ENCODE measurements at regions of chr7 and their contacts with region 1.

Region 1: GRCh38 chr7:154927624-154928143 is 75.2 kb downstream of the PAXIP1 start:
- DNase-seq: peak in 4 of 5 donors; percentile 58 to 78 (median 74)
- ATAC-seq: peak; percentile 43 to 90 (median 84)
- H3K4me3 ChIP-seq: peak overlapping the region; percentile 9 to 76 (median 64)
- H3K27ac ChIP-seq: peak overlapping the region; percentile 8 to 90 (median 77)
- H3K4me1 ChIP-seq: peaks cover 0 to 19% (median 6%) of the 10 kb centered on the region in 12 donors
- H3K27me3 ChIP-seq: no peaks in the 10 kb centered on the region
- CTCF ChIP-seq: peak; percentile 33 to 80 (median 64)
- POLR2A ChIP-seq: no peak

Region 2: GRCh38 chr7:155009570-155010157 is 82.0 kb after region 1 on chr7:
- intact Hi-C with region 1: loop called in 9 of 10 experiments (anchors 5 to 10 kb)
- DNase-seq: no peak
- ATAC-seq: no peak
- H3K4me3 ChIP-seq: no peak overlapping the region
- H3K27ac ChIP-seq: no peak overlapping the region
- H3K4me1 ChIP-seq: peaks cover 0 to 4% (median 0%) of the 10 kb centered on the region in 12 donors
- H3K27me3 ChIP-seq: no peaks in the 10 kb centered on the region
- CTCF ChIP-seq: peak in 5 of 12 donors; percentile 12 to 33 (median 23)
- POLR2A ChIP-seq: no peak

Region 3: DNA sequence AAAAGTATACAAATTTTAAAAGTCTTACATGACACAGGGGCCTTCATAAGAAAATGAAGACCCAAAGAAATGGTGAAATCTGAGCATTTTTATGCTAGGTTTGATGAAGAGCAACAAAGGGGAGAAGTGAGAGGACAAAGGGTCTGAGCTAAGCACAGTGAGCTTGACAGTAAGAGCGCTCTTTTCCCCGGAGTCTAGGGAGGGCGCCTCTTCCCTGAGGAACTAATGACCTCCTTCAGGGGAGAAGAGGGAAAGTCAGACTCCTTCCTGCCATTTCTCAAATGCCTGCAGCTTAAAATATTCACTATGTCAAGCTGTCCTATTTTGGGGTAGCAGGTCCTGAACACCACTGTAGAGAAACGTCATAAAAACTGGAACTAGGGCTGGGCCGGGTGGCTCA is 93.3 kb after region 1 on chr7:
- intact Hi-C with region 1: no loop called
- DNase-seq: no peak
- ATAC-seq: no peak
- H3K4me3 ChIP-seq: no peak overlapping the region
- H3K27ac ChIP-seq: no peak overlapping the region
- H3K4me1 ChIP-seq: no peaks in the 10 kb centered on the region
- H3K27me3 ChIP-seq: no peaks in the 10 kb centered on the region
- CTCF ChIP-seq: no peak
- POLR2A ChIP-seq: no peak

Region 4: GRCh38 chr7:155298834-155299534 is 371.3 kb after region 1 on chr7:
- intact Hi-C with region 1: loop called in 1 of 10 experiments (anchors 5 kb)
- DNase-seq: peak; percentile 92 to 96 (median 95)
- ATAC-seq: peak; percentile 85 to 92 (median 88)
- H3K4me3 ChIP-seq: peak overlapping the region; percentile 46 to 97 (median 90)
- H3K27ac ChIP-seq: peak overlapping the region; percentile 1 to 98 (median 92)
- H3K4me1 ChIP-seq: peaks cover 0 to 50% (median 27%) of the 10 kb centered on the region in 12 donors
- H3K27me3 ChIP-seq: no peaks in the 10 kb centered on the region
- CTCF ChIP-seq: peak in 2 of 12 donors; percentile 20 to 21
- POLR2A ChIP-seq: peak in 1 of 2 donors; percentile 59

Region 5: DNA sequence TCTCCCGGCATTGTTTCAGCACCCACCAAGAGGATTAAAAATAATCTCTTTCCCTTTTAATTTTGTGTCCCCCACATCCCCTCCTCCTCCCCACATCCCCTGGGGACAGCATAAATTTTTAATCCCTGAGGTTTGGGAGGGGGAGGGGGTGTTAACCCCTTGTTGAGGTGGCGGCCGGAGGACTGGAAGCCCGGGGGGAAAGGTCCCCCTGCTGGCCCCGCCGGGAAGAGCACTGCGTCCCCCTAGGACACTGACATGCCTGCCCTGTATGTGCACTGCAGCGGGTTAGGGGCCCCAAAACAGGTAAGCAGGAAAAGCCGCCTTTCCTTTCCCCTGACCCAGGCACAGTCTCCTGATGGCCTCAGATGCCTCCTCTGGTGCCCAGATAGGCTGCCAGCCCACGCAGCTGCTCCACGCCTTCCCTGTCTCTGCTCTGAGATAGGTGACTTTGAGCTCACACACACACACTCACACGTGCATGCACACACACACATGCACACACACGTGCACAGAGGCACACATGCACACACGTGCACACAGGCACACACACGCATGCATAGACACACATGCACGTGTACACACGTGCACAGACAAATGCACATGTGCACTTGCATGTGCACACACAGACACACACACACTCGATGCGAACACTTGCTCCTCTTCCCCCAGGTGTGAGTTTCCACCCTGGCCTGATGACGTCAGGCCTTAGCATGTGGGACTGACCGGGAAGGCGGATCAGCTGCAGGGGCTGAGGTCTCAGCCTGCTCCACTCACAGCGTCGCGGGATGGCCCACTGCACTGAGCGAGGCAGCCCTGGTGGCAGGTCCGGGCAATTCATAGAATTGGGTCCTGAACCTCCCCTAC is 606.4 kb after region 1 on chr7:
- intact Hi-C with region 1: loop called in 1 of 10 experiments (anchors 10 kb)
- DNase-seq: no peak
- ATAC-seq: peak in 3 of 4 donors; percentile 42 to 61 (median 59)
- H3K4me3 ChIP-seq: peak overlapping the region in 8 of 12 donors; percentile 12 to 36 (median 26)
- H3K27ac ChIP-seq: no peak overlapping the region
- H3K4me1 ChIP-seq: peaks cover 0 to 15% (median 9%) of the 10 kb centered on the region in 12 donors
- H3K27me3 ChIP-seq: peaks cover 34 to 98% (median 57%) of the 10 kb centered on the region in 9 donors
- CTCF ChIP-seq: peak; percentile 32 to 60 (median 44)
- POLR2A ChIP-seq: no peak

Region 6: DNA sequence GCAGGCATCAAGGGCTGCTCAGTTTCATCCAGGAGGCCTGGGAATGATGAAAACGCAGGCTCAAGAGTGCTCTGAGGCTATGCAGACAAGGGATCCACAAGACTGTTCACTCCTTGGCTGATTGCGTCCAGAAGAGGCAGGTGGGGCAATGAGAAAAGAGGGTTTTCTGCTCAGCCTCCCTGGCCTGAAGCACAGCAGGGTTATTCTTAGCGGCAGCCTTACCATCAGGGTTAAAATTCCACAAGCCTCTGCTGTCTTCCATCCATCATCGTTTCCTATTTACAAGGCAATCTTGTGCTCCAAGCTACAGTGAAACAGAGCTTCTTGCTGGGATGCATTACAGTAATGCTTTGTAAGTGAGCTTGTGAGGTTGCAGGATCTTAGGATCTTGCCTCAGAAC is 1014.0 kb after region 1 on chr7:
- intact Hi-C with region 1: no loop called
- DNase-seq: no peak
- ATAC-seq: no peak
- H3K4me3 ChIP-seq: no peak overlapping the region
- H3K27ac ChIP-seq: no peak overlapping the region
- H3K4me1 ChIP-seq: no peaks in the 10 kb centered on the region
- H3K27me3 ChIP-seq: peaks cover 0 to 24% (median 3%) of the 10 kb centered on the region in 9 donors
- CTCF ChIP-seq: no peak
- POLR2A ChIP-seq: no peak